Activated B cell treated with CpG ODN at 0.5 μM for 24 hours (primary cell): ENCODE measurements at regions of chr7 and their contacts with region 1.

Region 1: GRCh38 chr7:128209229-128210035 is 31.6 kb upstream of the LEP start:
- DNase-seq: peak; percentile 56
- ATAC-seq: peak; percentile 91
- H3K4me3 Mint-ChIP-seq: no peak overlapping the region
- H3K27ac Mint-ChIP-seq: no peak overlapping the region
- H3K4me1 Mint-ChIP-seq: no peaks in the 10 kb centered on the region
- H3K27me3 Mint-ChIP-seq: peaks cover 24% of the 10 kb centered on the region
- CTCF ChIP-seq: peak; percentile 93

Region 2: GRCh38 chr7:127447326-127447945 is 762.0 kb before region 1 on chr7:
- CTCF ChIA-PET with region 1: interaction called, 8 read pairs
- POLR2A ChIA-PET with region 1: no interaction called
- intact Hi-C with region 1: loop called (anchors 1 kb)
- DNase-seq: peak; percentile 31
- ATAC-seq: peak; percentile 100
- H3K4me3 Mint-ChIP-seq: no peak overlapping the region
- H3K27ac Mint-ChIP-seq: no peak overlapping the region
- H3K4me1 Mint-ChIP-seq: peaks cover 2% of the 10 kb centered on the region
- H3K27me3 Mint-ChIP-seq: peaks cover 34% of the 10 kb centered on the region
- CTCF ChIP-seq: no peak

Region 3: GRCh38 chr7:127557803-127558202 is 651.6 kb before region 1 on chr7:
- CTCF ChIA-PET with region 1: interaction called, 6 read pairs
- POLR2A ChIA-PET with region 1: no interaction called
- intact Hi-C with region 1: loop called (anchors 1 kb)
- DNase-seq: no peak
- ATAC-seq: no peak
- H3K4me3 Mint-ChIP-seq: no peak overlapping the region
- H3K27ac Mint-ChIP-seq: no peak overlapping the region
- H3K4me1 Mint-ChIP-seq: no peaks in the 10 kb centered on the region
- H3K27me3 Mint-ChIP-seq: no peaks in the 10 kb centered on the region
- CTCF ChIP-seq: no peak

Region 4: DNA sequence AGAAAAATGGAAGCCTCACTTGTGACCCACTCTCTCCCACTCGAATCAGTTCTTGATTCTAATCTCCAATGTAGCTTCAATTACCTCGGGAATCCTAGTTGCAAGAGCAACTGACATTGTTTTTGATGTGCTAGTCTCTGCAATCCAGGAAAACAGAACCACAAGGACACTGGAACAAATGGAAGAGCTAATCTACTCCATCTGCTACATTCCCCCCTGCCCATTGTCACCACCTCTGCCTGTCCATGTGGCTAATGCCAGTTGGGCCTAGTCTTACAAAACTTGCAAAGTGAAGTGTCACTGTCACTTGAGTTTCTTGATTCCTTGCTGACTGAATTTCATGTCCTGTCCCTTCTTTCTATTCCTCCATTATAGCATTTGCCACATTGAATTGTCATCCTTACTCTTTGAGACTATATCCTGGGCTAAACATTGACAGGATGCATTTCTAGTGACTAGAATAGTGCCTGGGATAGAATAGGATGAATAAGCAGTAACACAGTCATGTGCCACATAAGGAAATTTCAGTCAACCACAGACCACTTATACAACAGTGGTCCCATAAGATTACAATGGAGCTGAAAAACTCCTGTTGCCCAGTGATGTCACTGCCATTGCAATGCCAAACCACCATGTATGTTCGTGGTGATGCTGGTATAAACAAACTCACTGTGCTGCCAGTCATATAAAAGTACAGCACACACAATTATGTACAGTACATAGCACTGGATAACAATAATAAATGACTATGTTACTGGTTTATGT is 637.5 kb before region 1 on chr7:
- CTCF ChIA-PET with region 1: no interaction called
- POLR2A ChIA-PET with region 1: no interaction called
- intact Hi-C with region 1: no loop called
- DNase-seq: no peak
- ATAC-seq: no peak
- H3K4me3 Mint-ChIP-seq: no peak overlapping the region
- H3K27ac Mint-ChIP-seq: no peak overlapping the region
- H3K4me1 Mint-ChIP-seq: no peaks in the 10 kb centered on the region
- H3K27me3 Mint-ChIP-seq: no peaks in the 10 kb centered on the region
- CTCF ChIP-seq: no peak

Region 5: DNA sequence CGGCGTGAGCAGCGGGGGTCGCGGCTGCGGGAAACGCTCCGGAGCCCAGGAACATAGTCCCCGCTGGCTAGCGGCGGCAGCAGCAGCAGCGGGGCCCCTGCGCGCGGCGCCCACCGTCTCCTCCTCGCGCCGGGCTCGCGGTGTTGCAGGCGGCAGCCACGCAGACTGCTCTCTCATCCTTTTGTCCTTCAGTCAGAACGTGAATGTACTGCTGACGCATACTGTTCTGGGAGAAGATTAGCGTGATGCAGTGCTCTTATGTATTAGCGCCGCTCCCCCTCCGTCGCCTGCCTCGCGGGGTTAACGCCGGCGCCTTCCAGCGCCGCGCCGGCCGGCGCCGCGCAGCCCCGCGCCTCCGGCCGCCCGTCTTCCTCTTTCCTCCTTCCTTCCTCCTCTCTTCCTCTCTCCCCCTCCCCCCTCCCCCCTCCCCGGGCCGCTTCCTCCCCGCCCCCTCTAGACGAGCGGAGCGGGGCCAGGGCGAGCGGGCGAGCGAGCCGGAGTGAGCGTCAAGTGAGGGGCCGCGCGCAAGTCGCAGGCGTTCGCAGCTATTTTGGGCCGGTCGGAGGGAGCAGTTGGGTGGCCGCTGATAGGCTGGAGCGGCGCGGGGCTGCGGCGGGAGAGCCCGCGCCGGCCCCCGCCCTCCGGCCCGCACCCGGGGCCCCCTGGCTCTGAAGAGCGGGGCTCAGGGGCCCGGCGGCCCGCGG is 177.4 kb before region 1 on chr7:
- CTCF ChIA-PET with region 1: interaction called, 7 read pairs
- POLR2A ChIA-PET with region 1: no interaction called
- intact Hi-C with region 1: loop called (anchors 5 kb)
- DNase-seq: peak; percentile 45
- ATAC-seq: peak; percentile 83
- H3K4me3 Mint-ChIP-seq: peak overlapping the region; percentile 88
- H3K27ac Mint-ChIP-seq: no peak overlapping the region
- H3K4me1 Mint-ChIP-seq: peaks cover 26% of the 10 kb centered on the region
- H3K27me3 Mint-ChIP-seq: peaks cover 4% of the 10 kb centered on the region
- CTCF ChIP-seq: no peak

Region 6: GRCh38 chr7:128116333-128116723 is 93.1 kb before region 1 on chr7:
- CTCF ChIA-PET with region 1: no interaction called
- POLR2A ChIA-PET with region 1: no interaction called
- intact Hi-C with region 1: no loop called
- DNase-seq: no peak
- ATAC-seq: no peak
- H3K4me3 Mint-ChIP-seq: no peak overlapping the region
- H3K27ac Mint-ChIP-seq: no peak overlapping the region
- H3K4me1 Mint-ChIP-seq: peaks cover 55% of the 10 kb centered on the region
- H3K27me3 Mint-ChIP-seq: no peaks in the 10 kb centered on the region
- CTCF ChIP-seq: no peak

Region 7: DNA sequence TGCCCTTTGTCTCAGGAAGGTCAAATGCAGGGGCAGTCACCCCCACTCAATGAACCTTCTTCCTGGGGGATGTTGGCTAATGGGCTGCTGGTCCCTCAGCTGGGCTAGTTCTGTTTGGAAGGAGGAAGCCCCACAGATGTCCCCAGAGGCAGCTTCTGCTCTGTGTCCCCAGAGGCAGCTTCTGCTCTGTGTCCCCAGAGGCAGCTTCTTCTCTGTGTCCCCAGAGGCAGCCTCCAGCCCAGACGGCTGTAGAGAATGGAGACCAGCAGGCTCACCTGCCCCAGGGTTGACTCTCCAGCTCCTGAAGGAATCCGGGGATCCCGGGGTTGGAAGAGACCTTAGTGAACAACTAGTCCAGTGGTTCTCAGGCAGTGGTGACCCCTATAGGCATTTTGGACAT is 30.8 kb before region 1 on chr7:
- CTCF ChIA-PET with region 1: interaction called, 12 read pairs
- POLR2A ChIA-PET with region 1: no interaction called
- intact Hi-C with region 1: no loop called
- DNase-seq: peak; percentile 49
- ATAC-seq: peak; percentile 100
- H3K4me3 Mint-ChIP-seq: no peak overlapping the region
- H3K27ac Mint-ChIP-seq: no peak overlapping the region
- H3K4me1 Mint-ChIP-seq: peaks cover 49% of the 10 kb centered on the region
- H3K27me3 Mint-ChIP-seq: peaks cover 31% of the 10 kb centered on the region
- CTCF ChIP-seq: no peak

Region 8: DNA sequence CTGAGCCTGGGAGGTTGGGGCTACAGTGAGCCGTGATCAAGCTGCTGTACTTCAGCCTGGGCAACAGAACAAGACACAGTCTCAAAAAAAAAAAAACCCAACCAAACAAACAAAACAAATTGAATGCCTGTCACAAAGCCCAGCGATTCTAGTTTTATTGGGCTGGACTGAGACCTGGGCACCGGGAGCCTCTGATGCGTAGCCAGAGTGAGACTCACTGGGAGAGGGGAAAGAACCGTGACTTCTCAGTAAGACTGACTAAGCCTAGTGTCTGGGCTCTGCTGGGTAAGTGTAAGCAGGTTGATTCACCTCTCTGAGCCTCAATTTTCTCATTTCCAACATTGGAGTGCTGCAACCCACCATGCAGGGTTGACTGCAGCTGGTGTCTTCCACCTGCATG is 21.6 kb after region 1 on chr7:
- CTCF ChIA-PET with region 1: no interaction called
- POLR2A ChIA-PET with region 1: no interaction called
- intact Hi-C with region 1: no loop called
- DNase-seq: no peak
- ATAC-seq: no peak
- H3K4me3 Mint-ChIP-seq: no peak overlapping the region
- H3K27ac Mint-ChIP-seq: no peak overlapping the region
- H3K4me1 Mint-ChIP-seq: no peaks in the 10 kb centered on the region
- H3K27me3 Mint-ChIP-seq: peaks cover 24% of the 10 kb centered on the region
- CTCF ChIP-seq: no peak